HEK293 (cell line): ENCODE measurements at regions of chr15 and their contacts with region 1.

Region 1: DNA sequence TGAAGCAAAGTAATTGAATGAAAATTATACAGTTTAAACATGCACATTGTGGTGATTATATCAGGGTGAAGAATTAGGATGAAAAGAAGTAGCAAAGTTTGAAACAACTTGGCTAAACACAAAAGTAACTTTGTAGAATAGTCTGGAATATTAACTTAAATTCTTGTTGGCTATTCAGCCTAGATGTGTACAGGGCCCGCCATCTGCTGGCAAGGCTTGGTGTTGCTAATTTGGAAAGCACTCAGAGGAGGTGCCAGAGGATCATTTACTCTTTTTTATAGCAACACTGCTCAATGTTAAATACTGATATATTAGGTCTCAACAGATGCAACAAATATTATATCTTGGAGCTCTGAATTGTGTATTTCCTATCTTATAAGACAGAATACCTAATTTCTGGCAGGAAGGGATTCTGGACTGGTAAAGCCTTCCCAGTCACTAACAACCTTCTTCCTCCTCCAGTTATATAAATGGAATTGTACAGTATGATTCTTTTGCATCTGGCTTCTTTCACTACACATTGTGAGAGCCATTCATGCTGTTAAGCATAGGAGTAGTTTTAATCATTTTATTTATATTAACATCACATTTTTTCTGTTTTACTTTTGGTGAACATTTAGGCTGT is 36.1 kb downstream of the TTC23 start:
- H3K4me3 ChIP-seq: no peak overlapping the region
- H3K27ac ChIP-seq: no peak overlapping the region
- H3K4me1 ChIP-seq: no peaks in the 10 kb centered on the region
- CTCF ChIP-seq: peak; percentile 25; the same call in 1 of the 2 replicates

Region 2: DNA sequence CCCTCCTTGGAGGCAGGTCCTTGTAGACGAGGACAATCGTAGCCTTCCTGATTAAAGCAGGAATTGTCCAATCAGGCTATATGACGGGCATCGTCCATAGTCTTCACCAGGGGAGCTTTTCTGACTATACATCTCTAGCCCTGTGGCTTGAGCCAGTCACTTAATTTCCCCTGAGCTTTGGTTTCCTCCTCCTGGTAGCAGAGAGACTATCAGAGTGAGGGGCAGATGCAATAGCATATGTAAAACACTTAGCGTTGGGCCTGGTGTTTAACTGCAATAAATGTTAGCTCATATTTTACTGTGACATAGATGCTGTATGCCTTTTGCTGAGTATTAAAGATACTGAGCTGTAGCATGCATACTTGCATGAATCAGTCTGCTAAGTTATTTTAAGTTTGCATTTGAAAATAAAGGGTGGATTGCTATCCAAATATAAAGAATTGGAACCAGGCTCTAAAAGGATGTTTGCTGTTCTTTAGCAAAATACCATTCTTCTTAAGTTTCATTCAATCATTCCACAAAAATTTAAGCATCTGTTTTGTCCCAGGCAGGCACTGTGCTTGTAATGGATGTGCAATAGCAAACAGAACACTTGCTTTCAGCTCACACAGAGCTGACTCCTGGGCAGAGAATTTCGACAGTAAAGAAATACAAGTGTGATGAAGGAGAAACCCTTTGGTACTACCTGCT is 356.9 kb before region 1 on chr15:
- CTCF ChIA-PET with region 1: interaction called, 10 read pairs
- POLR2A ChIA-PET with region 1: no interaction called
- H3K4me3 ChIP-seq: no peak overlapping the region
- H3K27ac ChIP-seq: no peak overlapping the region
- H3K4me1 ChIP-seq: peaks cover 52% of the 10 kb centered on the region
- CTCF ChIP-seq: no peak

Region 3: GRCh38 chr15:99076552-99077308 is 136.6 kb before region 1 on chr15:
- CTCF ChIA-PET with region 1: interaction called, 15 read pairs
- POLR2A ChIA-PET with region 1: no interaction called
- H3K4me3 ChIP-seq: peak overlapping the region; percentile 1; the same call in 1 of the 2 replicates
- H3K27ac ChIP-seq: no peak overlapping the region
- H3K4me1 ChIP-seq: no peaks in the 10 kb centered on the region
- CTCF ChIP-seq: peak; percentile 70; the same call in 1 of the 2 replicates

Region 4: DNA sequence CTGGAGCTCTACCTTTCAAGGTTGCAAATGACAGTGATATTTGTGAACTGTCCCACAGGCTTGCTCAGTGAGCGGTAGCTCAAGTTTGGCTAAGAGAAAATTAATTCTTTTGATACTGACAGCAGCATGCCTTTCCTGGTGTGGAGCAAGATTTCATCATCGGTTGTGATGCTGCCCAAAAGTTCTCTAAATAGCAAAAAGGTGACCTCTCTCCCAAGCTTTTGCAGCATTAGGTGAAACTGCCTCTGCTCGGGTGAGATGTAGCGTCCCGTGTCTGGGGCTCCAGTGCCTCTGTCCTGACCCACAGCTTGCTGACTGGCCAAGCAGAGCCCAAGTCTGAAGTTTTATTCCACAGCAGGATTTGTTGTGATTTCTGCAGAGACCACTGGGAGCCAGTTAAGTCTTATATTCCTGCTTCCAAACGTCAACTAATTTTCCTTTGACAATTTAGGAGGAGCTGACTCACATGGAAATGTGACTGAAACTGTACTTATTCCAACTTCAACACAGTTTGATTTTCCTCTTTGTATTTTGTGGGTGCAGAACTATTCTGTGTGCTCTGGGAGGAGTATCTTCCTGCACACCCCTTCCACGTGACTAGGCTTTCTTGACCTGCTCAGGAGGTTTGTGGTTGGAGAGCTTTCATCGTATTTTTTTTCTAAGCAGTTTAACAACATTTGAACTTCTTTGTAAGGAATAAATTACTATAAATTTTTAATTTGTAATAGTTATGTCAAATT is 102.5 kb before region 1 on chr15:
- CTCF ChIA-PET with region 1: interaction called, 28 read pairs
- POLR2A ChIA-PET with region 1: interaction called, 4 read pairs
- H3K4me3 ChIP-seq: no peak overlapping the region
- H3K27ac ChIP-seq: no peak overlapping the region
- H3K4me1 ChIP-seq: no peaks in the 10 kb centered on the region; the same call in 1 of the 2 replicates
- CTCF ChIP-seq: no peak

Region 5: GRCh38 chr15:99202180-99202552 is 11.1 kb before region 1 on chr15:
- CTCF ChIA-PET with region 1: interaction called, 14 read pairs
- POLR2A ChIA-PET with region 1: no interaction called
- H3K4me3 ChIP-seq: no peak overlapping the region
- H3K27ac ChIP-seq: no peak overlapping the region
- H3K4me1 ChIP-seq: no peaks in the 10 kb centered on the region
- CTCF ChIP-seq: no peak

Region 6: GRCh38 chr15:99224372-99225214 is 11.3 kb after region 1 on chr15:
- CTCF ChIA-PET with region 1: interaction called, 45 read pairs
- POLR2A ChIA-PET with region 1: no interaction called
- H3K4me3 ChIP-seq: no peak overlapping the region
- H3K27ac ChIP-seq: no peak overlapping the region
- H3K4me1 ChIP-seq: no peaks in the 10 kb centered on the region
- CTCF ChIP-seq: no peak

Region 7: DNA sequence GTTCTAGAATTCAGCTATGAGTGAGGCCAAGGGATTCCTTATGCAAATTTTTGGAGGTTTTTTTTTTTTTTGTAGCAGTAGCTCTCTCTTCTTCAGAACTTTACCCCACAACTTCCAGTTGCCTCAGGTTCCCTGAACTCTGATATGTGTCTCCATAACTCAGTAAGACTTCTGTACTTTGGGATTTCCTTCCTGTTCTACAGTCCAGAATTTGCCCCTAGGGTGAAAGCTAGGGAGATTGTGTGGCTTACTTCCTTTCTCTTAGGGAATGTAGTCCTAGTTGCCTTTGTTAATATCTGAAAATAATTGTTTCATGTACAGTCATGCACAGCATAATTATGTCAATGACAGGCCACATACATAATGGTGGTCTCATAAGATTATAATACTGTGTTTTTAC is 68.8 kb after region 1 on chr15:
- CTCF ChIA-PET with region 1: no interaction called
- POLR2A ChIA-PET with region 1: no interaction called
- H3K4me3 ChIP-seq: no peak overlapping the region
- H3K27ac ChIP-seq: no peak overlapping the region
- H3K4me1 ChIP-seq: no peaks in the 10 kb centered on the region
- CTCF ChIP-seq: no peak

Region 8: DNA sequence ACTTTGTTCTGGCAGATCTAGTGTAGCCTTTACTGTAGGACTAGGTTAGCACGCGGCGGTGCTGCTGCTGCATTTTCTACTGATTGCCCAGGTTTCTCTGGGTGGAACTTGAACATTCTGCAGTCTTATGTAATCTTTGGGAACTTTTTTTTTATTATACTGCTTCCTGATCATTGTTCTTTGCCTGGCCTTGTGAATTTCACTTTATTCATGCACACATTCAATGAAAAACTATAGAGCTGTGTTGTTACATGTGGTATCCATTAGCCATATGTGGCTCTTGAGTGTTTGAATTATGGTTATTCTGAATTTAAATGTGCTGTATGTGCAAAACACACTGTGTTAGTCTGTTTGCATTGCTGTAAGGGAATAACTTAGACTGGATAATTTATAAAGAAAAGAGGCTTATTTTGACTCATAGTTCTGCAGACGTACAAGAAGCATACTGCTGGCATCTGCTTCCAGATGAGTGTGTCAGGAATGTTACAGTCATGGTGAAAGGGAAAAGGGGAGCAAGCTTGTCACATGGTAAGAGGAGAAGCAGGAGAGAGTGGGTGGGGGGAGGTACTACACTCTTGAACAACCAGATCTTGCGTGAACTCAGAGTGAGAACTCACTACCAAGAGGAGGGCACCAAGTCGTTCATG is 379.0 kb after region 1 on chr15:
- CTCF ChIA-PET with region 1: no interaction called
- POLR2A ChIA-PET with region 1: no interaction called
- H3K4me3 ChIP-seq: no peak overlapping the region
- H3K27ac ChIP-seq: no peak overlapping the region
- H3K4me1 ChIP-seq: no peaks in the 10 kb centered on the region
- CTCF ChIP-seq: no peak